ENCODE measurements at regions of chr17 and their contacts with region 1.

Region 1: GRCh38 chr17:37047631-37048104 is 98.9 kb downstream of the AATF start:
- DNase-seq: peak; percentile 82
- H3K4me3 ChIP-seq: no peak overlapping the region; a peak in 1 of 4 replicates
- H3K27ac ChIP-seq: no peak overlapping the region
- H3K4me1 ChIP-seq: peaks cover 0 to 2% of the 10 kb centered on the region in 2 experiments; a peak in 1 of 4 replicates
- H3K27me3 ChIP-seq: no peaks in the 10 kb centered on the region
- CTCF ChIP-seq: peak; percentile 94
- EP300 ChIP-seq: no peak; a peak in 1 of 4 replicates
- RAD21 ChIP-seq: peak; percentile 95

Region 2: DNA sequence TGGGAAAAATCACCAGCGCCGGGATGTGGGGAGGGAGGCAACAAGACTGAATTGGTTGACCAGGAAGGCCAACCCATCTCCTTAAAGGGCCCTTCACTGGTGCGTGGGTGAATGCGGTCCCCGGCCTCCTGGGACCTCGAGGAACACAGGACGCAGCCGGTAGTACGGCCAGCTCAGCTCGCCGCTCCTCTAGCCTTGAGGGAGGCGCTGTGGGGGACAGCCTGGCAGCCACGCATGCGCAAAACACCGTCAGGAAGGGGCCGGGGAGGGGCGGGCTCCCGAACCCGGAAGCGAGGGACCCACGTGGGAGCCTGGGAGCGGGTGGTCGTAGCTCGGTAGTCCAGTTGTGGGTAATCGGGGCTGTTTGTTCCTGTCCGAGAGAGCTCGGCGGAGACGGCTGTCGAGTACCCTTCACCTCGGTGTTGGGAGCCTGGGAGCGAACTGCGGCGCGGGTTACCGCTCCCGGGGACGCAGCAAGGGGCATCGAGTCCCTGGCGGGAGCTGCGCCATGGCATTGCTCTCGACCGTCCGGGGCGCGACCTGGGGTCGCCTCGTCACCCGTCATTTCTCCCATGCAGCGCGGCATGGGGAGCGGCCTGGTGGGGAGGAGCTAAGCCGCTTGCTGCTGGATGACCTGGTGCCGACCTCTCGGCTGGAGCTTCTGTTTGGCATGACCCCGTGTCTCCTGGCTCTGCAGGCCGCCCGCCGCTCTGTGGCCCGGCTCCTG is 446.2 kb before region 1 on chr17 and contains the start of gene MRM1:
- CTCF ChIA-PET with region 1: interaction called, 31 read pairs
- POLR2A ChIA-PET with region 1: interaction called, 5 read pairs
- DNase-seq: peak; percentile 98
- H3K4me3 ChIP-seq: peak within 1 kb of the TSS; percentile 85 to 90
- H3K27ac ChIP-seq: peak within 1 kb of the TSS; percentile 76 to 78
- H3K4me1 ChIP-seq: peaks cover 0 to 21% of the 10 kb centered on the region in 2 experiments; a peak in 2 of 4 replicates
- H3K27me3 ChIP-seq: no peaks in the 10 kb centered on the region
- CTCF ChIP-seq: peak; percentile 25
- EP300 ChIP-seq: no peak
- RAD21 ChIP-seq: no peak; the same call in 1 of the 2 replicates
- polyA plus RNA-seq, gene MRM1: 9.8 and 10.9 TPM in 2 replicates

Region 3: GRCh38 chr17:36937966-36938565 is 109.6 kb before region 1 on chr17:
- CTCF ChIA-PET with region 1: interaction called, 27 read pairs
- POLR2A ChIA-PET with region 1: no interaction called
- DNase-seq: peak; percentile 69
- H3K4me3 ChIP-seq: no peak overlapping the region
- H3K27ac ChIP-seq: no peak overlapping the region
- H3K4me1 ChIP-seq: peaks cover 0 to 32% of the 10 kb centered on the region in 2 experiments; a peak in 2 of 4 replicates
- H3K27me3 ChIP-seq: peaks cover 99% of the 10 kb centered on the region
- CTCF ChIP-seq: no peak
- EP300 ChIP-seq: no peak
- RAD21 ChIP-seq: no peak

Region 4: GRCh38 chr17:37028040-37028439 is 19.6 kb before region 1 on chr17:
- CTCF ChIA-PET with region 1: interaction called, 10 read pairs
- POLR2A ChIA-PET with region 1: no interaction called
- DNase-seq: no peak
- H3K4me3 ChIP-seq: no peak overlapping the region
- H3K27ac ChIP-seq: no peak overlapping the region
- H3K4me1 ChIP-seq: peaks cover 0 to 3% of the 10 kb centered on the region in 2 experiments; a peak in 1 of 4 replicates
- H3K27me3 ChIP-seq: no peaks in the 10 kb centered on the region
- CTCF ChIP-seq: no peak
- EP300 ChIP-seq: no peak
- RAD21 ChIP-seq: no peak

Region 5: DNA sequence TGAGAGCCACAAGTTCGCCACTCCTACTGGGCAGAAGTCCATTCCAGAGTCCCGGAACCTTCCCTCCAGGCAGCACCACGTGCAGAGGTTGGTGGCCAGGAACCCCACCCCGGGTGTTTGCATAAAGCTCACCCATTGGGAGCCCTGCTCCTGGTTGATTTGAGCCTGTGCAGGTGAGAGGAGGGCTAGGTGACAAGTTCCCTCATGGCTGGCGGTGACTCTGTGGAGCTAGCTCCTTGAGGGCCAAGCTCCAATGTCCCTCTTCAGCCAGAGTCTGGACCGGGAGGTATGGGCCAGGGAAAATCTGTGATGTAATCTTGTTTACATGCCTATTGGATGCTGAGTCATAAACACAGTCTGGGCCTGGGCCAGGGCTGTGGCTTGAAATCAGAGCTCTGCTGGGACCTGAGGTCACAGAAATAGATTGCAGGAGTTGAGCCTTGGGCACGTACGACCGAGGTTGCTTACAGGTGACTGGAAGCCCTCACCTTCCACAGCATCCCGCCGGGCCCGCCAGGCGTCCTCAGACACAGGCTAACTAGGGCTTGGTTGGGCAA is 20.0 kb after region 1 on chr17:
- CTCF ChIA-PET with region 1: interaction called, 36 read pairs
- POLR2A ChIA-PET with region 1: no interaction called
- DNase-seq: peak; percentile 44
- H3K4me3 ChIP-seq: no peak overlapping the region
- H3K27ac ChIP-seq: no peak overlapping the region
- H3K4me1 ChIP-seq: peaks cover 0 to 12% of the 10 kb centered on the region in 2 experiments; a peak in 1 of 4 replicates
- H3K27me3 ChIP-seq: no peaks in the 10 kb centered on the region
- CTCF ChIP-seq: no peak
- EP300 ChIP-seq: no peak
- RAD21 ChIP-seq: no peak

Region 6: GRCh38 chr17:37103231-37103630 is 55.6 kb after region 1 on chr17:
- CTCF ChIA-PET with region 1: no interaction called
- POLR2A ChIA-PET with region 1: no interaction called
- DNase-seq: no peak
- H3K4me3 ChIP-seq: no peak overlapping the region
- H3K27ac ChIP-seq: no peak overlapping the region
- H3K4me1 ChIP-seq: peaks cover 0 to 16% of the 10 kb centered on the region in 2 experiments; a peak in 2 of 4 replicates
- H3K27me3 ChIP-seq: no peaks in the 10 kb centered on the region
- CTCF ChIP-seq: no peak
- EP300 ChIP-seq: no peak
- RAD21 ChIP-seq: no peak

Region 7: GRCh38 chr17:37174205-37174604 is 126.5 kb after region 1 on chr17:
- CTCF ChIA-PET with region 1: interaction called, 65 read pairs
- POLR2A ChIA-PET with region 1: no interaction called
- DNase-seq: peak; percentile 61
- H3K4me3 ChIP-seq: no peak overlapping the region
- H3K27ac ChIP-seq: no peak overlapping the region
- H3K4me1 ChIP-seq: peaks cover 0 to 14% of the 10 kb centered on the region in 2 experiments; a peak in 3 of 4 replicates
- H3K27me3 ChIP-seq: no peaks in the 10 kb centered on the region
- CTCF ChIP-seq: peak; percentile 42
- EP300 ChIP-seq: no peak
- RAD21 ChIP-seq: peak; percentile 91

Region 8: GRCh38 chr17:37221865-37222264 is 174.2 kb after region 1 on chr17:
- CTCF ChIA-PET with region 1: interaction called, 11 read pairs
- POLR2A ChIA-PET with region 1: no interaction called
- DNase-seq: no peak
- H3K4me3 ChIP-seq: no peak overlapping the region
- H3K27ac ChIP-seq: no peak overlapping the region
- H3K4me1 ChIP-seq: peaks cover 0 to 9% of the 10 kb centered on the region in 2 experiments; a peak in 2 of 4 replicates
- H3K27me3 ChIP-seq: no peaks in the 10 kb centered on the region
- CTCF ChIP-seq: peak; percentile 32
- EP300 ChIP-seq: no peak
- RAD21 ChIP-seq: no peak